GM13977 (cell line): ENCODE measurements at regions of chr3 and their contacts with region 1.

Region 1: GRCh38 chr3:149726716-149727407 is 25.4 kb downstream of the COMMD2 start:
- DNase-seq: peak; percentile 52
- CTCF ChIP-seq: no peak

Region 2: GRCh38 chr3:149566292-149566975 is 160.4 kb before region 1 on chr3:
- in situ Hi-C with region 1: loop called (anchors 10 kb)
- DNase-seq: no peak
- CTCF ChIP-seq: no peak